Ascending aorta (tissue), 2 donors: ENCODE measurements at regions of chr5 and their contacts with region 1.

Region 1: DNA sequence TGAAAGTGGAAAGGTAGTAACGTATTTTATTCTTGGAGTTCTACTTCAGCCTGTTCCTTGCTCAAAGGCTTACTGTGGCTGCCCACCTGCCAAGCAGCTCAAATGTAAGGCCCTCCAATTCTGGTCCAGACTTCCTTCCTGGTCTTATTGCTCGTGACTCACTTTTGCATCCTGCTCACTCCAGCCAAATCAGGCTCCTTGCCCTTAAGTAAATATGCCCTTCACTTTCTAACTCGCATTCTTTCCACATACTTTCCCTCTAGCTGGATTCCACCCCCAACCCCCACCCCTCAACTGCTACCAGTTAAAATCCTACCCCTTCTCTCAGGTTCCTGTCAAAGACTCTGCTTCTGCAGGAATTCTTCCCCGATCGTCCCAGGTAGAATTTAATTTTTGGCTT is 96.6 kb downstream of the GALNT10 start:
- DNase-seq: peak in 1 of 2 donors; percentile 79
- H3K4me3 ChIP-seq: no peak overlapping the region
- H3K27ac ChIP-seq: peak overlapping the region; percentile 71 to 87
- H3K4me1 ChIP-seq: peaks cover 0 to 39% of the 10 kb centered on the region in 2 donors
- H3K27me3 ChIP-seq: no peaks in the 10 kb centered on the region
- CTCF ChIP-seq: no peak

Region 2: GRCh38 chr5:154221371-154221896 is 65.7 kb before region 1 on chr5:
- intact Hi-C with region 1: loop called (anchors 5 kb)
- DNase-seq: no peak
- H3K4me3 ChIP-seq: no peak overlapping the region
- H3K27ac ChIP-seq: peak overlapping the region; percentile 69 to 70
- H3K4me1 ChIP-seq: peaks cover 12 to 19% of the 10 kb centered on the region in 2 donors
- H3K27me3 ChIP-seq: no peaks in the 10 kb centered on the region
- CTCF ChIP-seq: no peak

Region 3: DNA sequence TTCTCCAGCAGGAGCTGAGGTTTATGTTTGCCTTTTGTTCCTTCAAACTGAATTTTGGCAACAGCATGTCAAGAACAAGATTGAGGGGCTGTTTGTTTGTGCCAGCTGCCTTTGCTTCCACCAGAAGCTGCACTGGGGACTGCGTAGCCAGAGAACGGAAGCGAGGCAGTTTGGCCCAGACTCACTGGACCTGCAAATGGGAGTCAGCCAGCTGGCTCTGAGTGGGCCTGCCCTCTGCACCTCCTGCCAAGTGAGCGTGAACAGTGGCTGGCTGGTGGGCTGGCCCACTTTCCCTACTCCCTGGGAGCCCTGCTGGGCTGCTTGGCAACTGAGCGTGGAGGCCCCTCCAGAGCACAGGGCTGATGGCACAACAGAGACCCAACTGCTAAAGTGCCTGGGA is 15.0 kb after region 1 on chr5:
- intact Hi-C with region 1: loop called (anchors 2 kb)
- DNase-seq: peak in 1 of 2 donors; percentile 76
- H3K4me3 ChIP-seq: peak overlapping the region in 1 of 2 donors; percentile 45
- H3K27ac ChIP-seq: peak overlapping the region; percentile 43 to 72
- H3K4me1 ChIP-seq: peaks cover 0 to 10% of the 10 kb centered on the region in 2 donors
- H3K27me3 ChIP-seq: no peaks in the 10 kb centered on the region
- CTCF ChIP-seq: no peak

Region 4: GRCh38 chr5:154356020-154356655 is 69.0 kb after region 1 on chr5:
- intact Hi-C with region 1: loop called (anchors 5 kb)
- DNase-seq: no peak
- H3K4me3 ChIP-seq: no peak overlapping the region
- H3K27ac ChIP-seq: peak overlapping the region; percentile 9 to 44
- H3K4me1 ChIP-seq: peaks cover 7 to 38% of the 10 kb centered on the region in 2 donors
- H3K27me3 ChIP-seq: no peaks in the 10 kb centered on the region
- CTCF ChIP-seq: no peak